Activated naive CD4-positive, alpha-beta T cell treated with anti-CD3 and anti-CD28 coated beads for 36 hours (primary cell): ENCODE measurements at regions of chr16 and their contacts with region 1.

Region 1: DNA sequence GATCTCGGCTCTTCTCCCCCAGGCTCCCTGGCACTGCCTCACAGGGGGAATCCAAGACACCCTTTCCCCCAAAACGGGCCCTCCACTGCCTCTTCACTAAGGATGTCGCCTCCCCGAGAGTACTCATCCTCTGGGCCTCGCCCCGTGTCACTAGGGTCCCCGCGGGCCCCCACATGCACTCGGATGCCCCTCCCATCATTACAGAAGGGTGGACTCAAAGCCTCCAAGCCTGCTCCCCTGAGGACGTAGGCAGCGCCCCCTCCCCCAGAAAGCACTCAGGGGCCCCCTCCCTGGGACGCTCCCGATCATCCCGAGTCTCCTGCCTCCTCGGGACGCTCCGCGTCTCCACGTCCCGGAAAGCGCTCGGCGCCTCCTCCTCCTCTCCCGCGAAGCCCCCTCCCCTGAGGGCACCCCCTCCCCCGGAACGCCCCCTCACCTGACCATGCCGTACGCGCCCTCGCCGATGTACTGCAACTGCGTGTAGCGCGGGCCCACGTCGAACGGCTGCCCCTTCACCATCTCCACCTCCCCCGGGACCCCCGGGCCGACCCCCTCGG is 338 bp downstream of the MAPK3 start:
- DNase-seq: no peak
- H3K4me3 Mint-ChIP-seq: peak overlapping the region; percentile 88
- H3K27ac Mint-ChIP-seq: peak overlapping the region; percentile 85
- H3K4me1 Mint-ChIP-seq: peaks cover 30% of the 10 kb centered on the region
- H3K27me3 Mint-ChIP-seq: no peaks in the 10 kb centered on the region

Region 2: DNA sequence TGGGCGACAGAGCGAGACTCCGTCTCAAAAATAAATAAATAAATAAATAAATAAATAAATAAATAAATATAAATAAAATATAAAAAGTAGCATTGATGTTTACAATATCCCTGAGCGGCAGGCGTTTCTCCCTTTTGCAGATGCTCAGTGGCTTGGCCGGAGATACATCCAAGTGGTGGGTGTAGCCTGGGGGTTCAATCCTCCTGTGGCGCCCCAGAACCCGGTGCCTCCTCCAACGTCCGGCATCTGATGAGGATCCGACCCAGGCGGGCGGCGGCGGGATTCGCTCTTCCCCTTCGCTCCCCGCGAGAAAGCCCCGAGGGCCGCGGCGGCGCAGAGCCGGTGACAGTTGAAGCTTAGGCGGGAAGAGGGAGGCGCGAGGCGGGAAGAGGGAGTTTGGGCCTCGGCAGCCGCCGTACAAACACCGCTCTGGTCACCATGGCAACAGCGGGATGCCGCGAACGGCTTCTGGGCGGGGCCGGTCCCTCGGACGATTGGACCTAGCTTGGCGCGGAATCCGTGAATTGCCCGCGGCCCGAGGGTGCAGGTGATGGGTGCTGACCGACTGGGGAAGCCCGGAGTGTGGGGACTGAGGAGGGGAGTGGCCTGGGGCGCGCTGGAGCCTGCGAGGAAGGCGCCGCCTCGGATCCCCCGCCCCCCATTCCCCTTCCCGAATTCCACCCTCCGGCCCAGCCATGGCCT is 69.9 kb before region 1 on chr16:
- CTCF ChIA-PET with region 1: no interaction called
- intact Hi-C with region 1: loop called (anchors 2 kb)
- DNase-seq: peak; percentile 95
- H3K4me3 Mint-ChIP-seq: peak overlapping the region; percentile 87
- H3K27ac Mint-ChIP-seq: peak overlapping the region; percentile 48
- H3K4me1 Mint-ChIP-seq: peaks cover 20% of the 10 kb centered on the region
- H3K27me3 Mint-ChIP-seq: no peaks in the 10 kb centered on the region

Region 3: GRCh38 chr16:30609926-30610839 is 487.5 kb after region 1 on chr16 and contains the start of gene ZNF689:
- CTCF ChIA-PET with region 1: no interaction called
- intact Hi-C with region 1: loop called (anchors 5 kb)
- DNase-seq: peak; percentile 98
- H3K4me3 Mint-ChIP-seq: peak within 1 kb of the TSS; percentile 83
- H3K27ac Mint-ChIP-seq: peak within 1 kb of the TSS; percentile 96
- H3K4me1 Mint-ChIP-seq: peaks cover 20% of the 10 kb centered on the region
- H3K27me3 Mint-ChIP-seq: no peaks in the 10 kb centered on the region
- total RNA-seq, gene ZNF689: 10.7 to 11.5 TPM